ENCODE measurements at regions of chr3 and their contacts with region 1.

Region 1: DNA sequence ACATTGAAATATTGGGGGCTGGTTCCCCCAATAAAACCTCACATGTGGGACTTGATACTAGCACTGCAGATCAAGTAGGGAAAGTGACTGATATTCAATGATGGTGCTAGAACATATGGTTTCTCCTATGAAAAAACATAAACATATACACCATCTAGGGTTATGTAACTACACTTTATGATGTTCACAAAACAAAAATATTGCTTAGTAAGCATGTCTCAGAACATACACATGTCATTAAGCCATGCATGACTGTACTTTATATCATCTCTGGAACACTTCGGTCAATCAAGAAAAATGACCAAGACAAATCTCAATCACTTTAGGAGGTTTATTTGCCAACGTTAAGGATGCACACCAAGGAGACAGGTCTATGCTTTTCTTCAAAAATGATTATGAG is 57.4 kb downstream of the ZNF717 start:
- DNase-seq: no peak
- ATAC-seq: no peak
- H3K4me3 Mint-ChIP-seq: no peak overlapping the region
- H3K27ac Mint-ChIP-seq: no peak overlapping the region
- H3K4me1 Mint-ChIP-seq: no peaks in the 10 kb centered on the region
- H3K27me3 Mint-ChIP-seq: no peaks in the 10 kb centered on the region

Region 2: DNA sequence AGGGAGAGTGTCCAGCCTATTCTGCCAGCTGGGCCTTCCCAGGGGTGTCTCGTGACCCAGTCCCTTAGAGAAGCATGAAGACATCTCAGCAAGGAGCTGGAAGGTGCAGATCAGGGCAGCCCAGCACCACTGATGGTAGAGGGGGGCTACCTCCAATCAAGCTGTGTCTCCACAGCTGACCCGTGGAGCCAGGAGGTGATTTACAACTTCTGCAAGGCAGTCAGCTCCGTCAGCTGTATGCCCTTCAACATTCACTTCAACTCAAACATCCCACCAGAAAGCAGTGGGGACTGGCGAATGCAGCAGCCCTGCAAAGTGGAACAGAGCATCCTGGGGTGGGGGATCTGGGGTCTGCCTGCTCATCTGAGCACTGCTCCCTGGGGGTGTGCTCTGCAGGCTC is 96.4 kb before region 1 on chr3:
- CTCF ChIA-PET with region 1: no interaction called
- POLR2A ChIA-PET with region 1: no interaction called
- intact Hi-C with region 1: no loop called
- DNase-seq: no peak
- ATAC-seq: no peak
- H3K4me3 Mint-ChIP-seq: no peak overlapping the region
- H3K27ac Mint-ChIP-seq: no peak overlapping the region
- H3K4me1 Mint-ChIP-seq: no peaks in the 10 kb centered on the region
- H3K27me3 Mint-ChIP-seq: no peaks in the 10 kb centered on the region

Region 3: DNA sequence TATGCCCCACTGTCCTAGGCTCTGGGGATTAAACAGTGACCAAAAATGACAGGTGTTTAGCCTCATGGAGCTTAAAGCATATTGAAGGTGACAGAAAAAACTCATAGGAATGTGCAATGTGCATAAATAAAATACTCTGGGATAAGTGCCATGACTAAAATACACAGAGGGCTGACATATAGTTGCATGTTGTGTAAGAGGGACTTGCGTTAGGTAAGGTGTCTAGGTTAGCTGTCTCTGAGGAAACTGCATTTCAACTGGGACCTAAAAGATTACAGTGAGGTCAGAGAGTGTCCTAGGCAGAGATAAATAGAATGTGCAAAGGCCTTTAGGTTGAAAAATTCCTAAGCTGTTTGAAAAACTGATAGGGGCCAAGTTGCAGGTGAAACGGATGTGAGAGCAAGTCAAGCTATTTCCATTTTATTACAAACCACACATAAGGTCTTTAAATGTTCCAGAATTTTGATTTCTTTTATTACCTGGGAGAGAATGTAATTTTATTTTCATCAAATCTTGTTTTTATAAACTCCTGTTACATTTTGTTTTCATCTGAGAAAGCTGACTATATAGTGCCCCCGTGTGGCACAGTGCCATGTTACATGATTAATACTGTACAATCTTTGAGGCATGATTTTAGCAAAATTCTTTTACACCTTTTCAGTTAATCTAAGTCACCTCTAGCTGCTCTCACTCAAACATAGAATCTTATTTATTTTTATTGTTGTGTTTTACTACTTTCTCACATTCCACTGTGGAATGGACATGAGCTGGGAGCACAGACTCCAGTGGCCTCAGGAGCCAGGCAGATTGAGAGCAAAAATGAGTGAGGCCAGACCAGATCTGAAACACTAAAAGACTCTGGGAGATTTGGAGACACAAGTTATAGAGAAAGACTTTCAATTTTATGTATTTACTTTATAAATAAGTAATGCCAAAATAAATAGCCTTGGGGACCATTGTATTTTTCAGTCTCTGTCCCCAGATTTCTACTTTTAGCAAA is 316.9 kb after region 1 on chr3:
- CTCF ChIA-PET with region 1: interaction called, 3 read pairs
- POLR2A ChIA-PET with region 1: no interaction called
- intact Hi-C with region 1: loop called in 1 of 2 experiments (anchors 5 kb)
- DNase-seq: peak; percentile 51
- ATAC-seq: no peak
- H3K4me3 Mint-ChIP-seq: no peak overlapping the region
- H3K27ac Mint-ChIP-seq: no peak overlapping the region
- H3K4me1 Mint-ChIP-seq: no peaks in the 10 kb centered on the region
- H3K27me3 Mint-ChIP-seq: no peaks in the 10 kb centered on the region